Left ventricle myocardium superior (tissue), 1 donor: ENCODE measurements at regions of chr12 and their contacts with region 1.

Region 1: GRCh38 chr12:120649442-120650232 is 9.2 kb downstream of the CABP1 start:
- DNase-seq: peak; percentile 57
- ATAC-seq: peak; percentile 5

Region 2: GRCh38 chr12:120580787-120581723 is 68.6 kb before region 1 on chr12 and contains the start of gene POP5:
- intact Hi-C with region 1: loop called (anchors 5 kb)
- DNase-seq: peak; percentile 97
- ATAC-seq: peak; percentile 91
- total RNA-seq, gene POP5: 34.0 TPM

Region 3: DNA sequence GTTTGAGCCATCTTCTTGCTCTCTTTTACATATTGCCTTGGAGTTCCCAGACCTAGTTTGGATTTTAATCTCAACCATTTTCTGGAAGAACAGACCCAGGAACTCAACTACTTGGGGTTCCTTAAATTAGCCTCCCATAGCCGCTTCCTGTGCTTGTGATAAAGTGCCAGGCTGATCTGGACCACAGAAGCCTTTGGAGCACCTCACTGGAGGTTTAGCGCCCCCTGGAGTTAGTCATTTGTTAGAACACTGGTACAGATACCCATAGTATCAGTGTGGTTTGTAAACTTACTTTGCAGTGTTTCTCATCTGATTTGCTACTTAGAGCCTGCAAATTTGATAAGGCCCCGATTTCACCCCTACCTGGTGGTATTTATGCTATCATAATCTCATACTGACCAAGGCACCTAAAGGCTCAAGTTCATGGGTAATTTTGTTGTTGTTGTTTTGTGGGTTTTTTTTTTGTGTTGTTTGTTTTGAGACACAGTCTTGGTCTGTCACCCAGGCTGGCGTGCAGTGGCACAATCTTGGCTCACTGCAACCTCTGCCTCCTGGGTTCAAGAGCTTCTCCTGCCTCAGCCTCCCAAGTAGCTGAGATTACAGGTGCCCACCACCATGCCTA is 64.3 kb after region 1 on chr12:
- intact Hi-C with region 1: loop called (anchors 2 kb)
- DNase-seq: peak; percentile 57
- ATAC-seq: peak; percentile 67

Region 4: GRCh38 chr12:120741476-120742421 is 92.1 kb after region 1 on chr12:
- intact Hi-C with region 1: no loop called
- DNase-seq: peak; percentile 69
- ATAC-seq: peak; percentile 65